Activated CD4-positive, alpha-beta memory T cell treated with anti-CD3 and anti-CD28 coated beads, Interleukin-2, amount 10 ng/mL, durations not matched to agents 7 days and 5 days (primary cell): ENCODE measurements at regions of chr11 and their contacts with region 1.

Region 1: GRCh38 chr11:47715082-47715669 is at the start of gene AGBL2:
- DNase-seq: peak; percentile 89
- H3K4me3 Mint-ChIP-seq: peak within 1 kb of the TSS; percentile 87
- H3K27ac Mint-ChIP-seq: peak within 1 kb of the TSS; percentile 91
- H3K4me1 Mint-ChIP-seq: peaks cover 34% of the 10 kb centered on the region
- H3K27me3 Mint-ChIP-seq: no peaks in the 10 kb centered on the region
- total RNA-seq, gene AGBL2: 5.9 to 7.7 TPM

Region 2: DNA sequence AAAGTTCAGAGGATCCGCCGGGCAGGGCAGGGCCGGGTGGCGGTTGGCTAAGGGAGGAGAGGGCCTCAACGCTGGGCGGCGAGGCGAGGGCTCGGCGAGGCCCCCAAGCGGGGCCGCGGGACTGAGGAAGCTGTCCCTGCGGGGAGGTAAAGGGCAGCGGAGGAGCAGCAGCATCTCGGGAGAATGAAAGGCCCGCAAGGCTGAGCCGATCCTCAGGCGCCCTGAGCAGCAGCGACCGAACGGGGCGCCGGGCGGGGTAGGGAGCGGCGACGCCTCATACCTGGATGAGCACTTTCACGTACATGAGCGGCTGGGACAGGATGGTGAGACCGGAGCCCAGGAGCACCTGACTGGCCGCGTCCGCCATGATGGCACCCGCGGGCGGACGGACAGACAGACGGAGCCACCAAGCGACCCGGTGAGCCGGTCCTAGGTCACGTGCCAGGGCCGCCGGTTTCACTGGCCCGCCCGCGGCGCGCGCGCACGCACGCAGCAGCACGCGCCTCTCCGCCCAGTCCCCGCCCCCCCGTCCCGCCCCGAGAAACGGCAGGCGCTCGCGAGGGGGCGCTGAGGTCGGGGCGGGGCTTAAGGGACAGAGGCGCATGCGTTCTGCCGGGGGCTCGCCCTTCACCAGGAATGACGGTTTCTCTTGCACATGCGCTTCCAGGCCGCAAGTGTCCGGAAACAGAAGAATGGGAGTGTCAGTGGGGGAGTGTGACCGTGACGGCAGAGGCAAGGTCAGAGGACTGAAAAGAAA is 72.9 kb before region 1 on chr11 and contains the start of gene MTCH2:
- CTCF ChIA-PET with region 1: interaction called, 22 read pairs
- POLR2A ChIA-PET with region 1: interaction called, 20 read pairs
- DNase-seq: peak; percentile 96
- H3K4me3 Mint-ChIP-seq: peak within 1 kb of the TSS; percentile 96
- H3K27ac Mint-ChIP-seq: peak within 1 kb of the TSS; percentile 88
- H3K4me1 Mint-ChIP-seq: peaks cover 25% of the 10 kb centered on the region
- H3K27me3 Mint-ChIP-seq: no peaks in the 10 kb centered on the region
- total RNA-seq, gene MTCH2: 87.8 to 91.7 TPM

Region 3: GRCh38 chr11:47847892-47848635 is 132.9 kb after region 1 on chr11 and contains the start of gene NUP160:
- CTCF ChIA-PET with region 1: no interaction called
- POLR2A ChIA-PET with region 1: interaction called, 12 read pairs
- DNase-seq: peak; percentile 91
- H3K4me3 Mint-ChIP-seq: peak within 1 kb of the TSS; percentile 89
- H3K27ac Mint-ChIP-seq: peak within 1 kb of the TSS; percentile 94
- H3K4me1 Mint-ChIP-seq: peaks cover 49% of the 10 kb centered on the region
- H3K27me3 Mint-ChIP-seq: no peaks in the 10 kb centered on the region
- total RNA-seq, gene NUP160: 52.0 to 52.9 TPM